Ascending aorta (tissue), 2 donors: ENCODE measurements at regions of chr14 and their contacts with region 1.

Region 1: DNA sequence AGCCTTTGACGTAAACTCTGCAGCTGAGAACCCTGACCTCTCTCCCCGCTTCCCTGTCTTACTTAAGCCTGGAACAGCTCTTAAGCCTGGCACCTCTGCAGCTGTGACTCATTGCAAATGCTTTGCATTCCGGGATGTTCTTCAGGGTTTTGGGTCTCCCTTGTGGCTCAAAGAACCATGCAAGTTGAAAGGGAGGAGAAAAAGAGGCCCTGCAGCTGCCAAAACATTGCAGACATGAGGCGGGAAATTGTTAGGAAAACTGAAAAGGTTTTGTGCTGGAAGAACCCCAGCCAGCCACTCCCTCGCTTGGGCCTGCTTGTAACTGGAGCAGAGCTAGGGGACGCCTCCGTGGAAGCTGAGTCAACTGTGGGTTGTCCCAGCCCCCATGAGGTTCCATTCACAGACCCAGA is 60.2 kb upstream of the FERMT2 start:
- DNase-seq: peak in 1 of 2 donors; percentile 89
- H3K4me3 ChIP-seq: no peak overlapping the region
- H3K27ac ChIP-seq: peak overlapping the region; percentile 8 to 30
- H3K4me1 ChIP-seq: peaks cover 0 to 5% of the 10 kb centered on the region in 2 donors
- H3K27me3 ChIP-seq: no peaks in the 10 kb centered on the region
- CTCF ChIP-seq: no peak

Region 2: DNA sequence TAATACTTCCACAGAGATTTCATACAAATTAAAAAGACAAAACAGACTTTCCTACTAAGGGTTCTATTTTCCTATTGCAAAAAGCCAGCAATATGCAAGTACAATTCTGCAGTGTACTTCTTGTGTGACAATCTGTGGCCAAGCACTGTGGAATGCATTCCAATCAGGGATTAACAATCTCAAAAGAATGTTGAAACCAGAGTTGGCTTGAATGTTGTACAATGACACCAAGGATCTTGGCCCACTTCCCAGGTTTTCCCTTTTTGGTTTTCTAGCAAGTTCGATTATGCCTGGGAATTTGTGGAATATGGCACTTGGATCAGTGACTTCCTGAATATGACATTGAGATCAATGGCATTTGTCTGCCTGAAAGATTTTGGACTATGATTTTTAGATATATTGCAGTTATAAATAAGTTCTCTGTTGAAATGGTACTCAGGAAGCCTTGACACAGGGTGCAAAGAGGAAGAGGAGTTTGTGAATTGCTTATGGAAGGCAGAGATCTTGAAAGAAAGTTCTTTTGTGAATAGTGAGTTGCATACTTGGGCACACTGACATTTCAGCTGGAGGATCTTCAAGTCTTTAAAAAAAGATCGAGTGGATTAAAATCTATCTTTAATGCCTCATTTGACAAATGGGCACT is 21.2 kb after region 1 on chr14:
- intact Hi-C with region 1: loop called (anchors 2 kb)
- DNase-seq: peak in 1 of 2 donors; percentile 71
- H3K4me3 ChIP-seq: no peak overlapping the region
- H3K27ac ChIP-seq: peak overlapping the region; percentile 35 to 44
- H3K4me1 ChIP-seq: peaks cover 3 to 35% of the 10 kb centered on the region in 2 donors
- H3K27me3 ChIP-seq: no peaks in the 10 kb centered on the region
- CTCF ChIP-seq: no peak